ENCODE measurements at regions of chr19 and their contacts with region 1.

Region 1: DNA sequence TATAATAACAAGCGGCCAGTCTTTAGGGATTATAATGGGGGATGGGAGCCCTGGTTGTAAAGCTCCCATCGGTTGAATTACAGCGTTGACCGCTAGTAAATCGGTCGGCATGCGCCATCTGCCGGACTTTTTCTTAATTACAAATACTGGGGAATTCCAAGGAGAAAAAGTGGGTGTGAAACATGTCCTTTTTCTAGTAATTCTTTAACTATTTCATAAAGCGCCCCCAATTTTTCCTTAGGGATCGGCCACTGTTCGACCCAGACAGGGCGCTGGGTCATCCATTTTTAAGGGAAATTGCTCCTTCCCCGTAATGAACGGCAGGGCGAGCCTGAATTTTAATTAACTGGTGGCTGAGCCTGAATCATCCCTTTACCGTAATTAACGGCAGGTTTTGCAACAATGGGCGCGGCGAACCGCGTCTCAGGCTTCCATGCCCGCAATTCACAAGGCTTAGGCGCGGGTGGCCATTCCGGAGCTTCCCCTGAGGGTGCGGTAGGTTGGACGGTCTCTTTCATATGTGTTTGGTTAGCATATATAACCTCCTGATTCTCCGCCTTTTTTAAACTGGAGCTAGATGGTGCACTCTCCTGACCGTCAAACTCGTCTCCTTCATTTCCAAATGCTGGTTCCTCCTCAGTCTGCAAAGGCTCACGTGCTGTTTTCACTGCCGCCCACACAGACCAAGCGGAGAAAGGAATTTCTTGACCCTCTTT is 30.2 kb upstream of the EVI5L start:
- DNase-seq: peak; percentile 76
- H3K4me3 ChIP-seq: peak overlapping the region in 1 of 4 donors; percentile 15
- H3K27ac ChIP-seq: no peak overlapping the region
- H3K4me1 ChIP-seq: peaks cover 0 to 4% (median 0%) of the 10 kb centered on the region in 4 donors
- H3K27me3 ChIP-seq: peaks cover 4 to 80% (median 35%) of the 10 kb centered on the region in 3 donors
- CTCF ChIP-seq: peak in 3 of 4 experiments; percentile 33 to 42 (median 38)
- EP300 ChIP-seq: no peak
- POLR2A ChIP-seq: no peak

Region 2: DNA sequence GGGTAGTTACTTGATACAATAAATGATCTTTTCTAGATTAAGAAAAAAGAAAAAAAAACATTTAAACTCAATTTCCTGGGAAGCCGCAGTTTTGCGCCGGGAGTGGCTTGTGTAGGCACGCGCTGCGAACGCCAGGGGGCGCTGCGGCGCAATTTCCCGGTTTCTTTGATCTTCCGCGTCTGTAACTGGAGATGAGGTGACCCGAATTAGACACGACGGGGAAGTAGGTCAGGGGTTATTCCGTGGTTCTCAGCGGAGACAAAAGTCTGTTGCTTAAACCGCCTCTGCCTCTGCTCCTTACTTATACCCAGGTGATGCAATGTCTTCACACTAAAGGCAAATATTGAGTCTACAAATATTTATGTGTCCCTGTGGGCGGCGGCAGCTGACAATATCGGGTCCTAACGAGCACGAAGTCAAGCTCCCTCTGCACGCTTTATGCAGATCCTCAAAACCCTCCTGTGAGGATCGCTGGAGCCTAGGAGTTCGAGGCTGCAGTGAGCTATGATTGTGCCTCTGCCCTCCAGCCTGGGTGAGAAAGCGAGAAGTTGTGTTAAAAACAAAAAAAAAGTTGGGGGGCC is 147.6 kb before region 1 on chr19:
- intact Hi-C with region 1: loop called (anchors 2 kb)
- DNase-seq: peak; percentile 90
- H3K4me3 ChIP-seq: peak overlapping the region in 2 of 4 donors; percentile 28 to 30
- H3K27ac ChIP-seq: peak overlapping the region in 1 of 4 donors; percentile 35
- H3K4me1 ChIP-seq: peaks cover 0 to 8% (median 4%) of the 10 kb centered on the region in 4 donors
- H3K27me3 ChIP-seq: peaks cover 0 to 12% (median 0%) of the 10 kb centered on the region in 3 donors
- CTCF ChIP-seq: peak; percentile 88 to 96 (median 92)
- EP300 ChIP-seq: no peak
- POLR2A ChIP-seq: no peak

Region 3: DNA sequence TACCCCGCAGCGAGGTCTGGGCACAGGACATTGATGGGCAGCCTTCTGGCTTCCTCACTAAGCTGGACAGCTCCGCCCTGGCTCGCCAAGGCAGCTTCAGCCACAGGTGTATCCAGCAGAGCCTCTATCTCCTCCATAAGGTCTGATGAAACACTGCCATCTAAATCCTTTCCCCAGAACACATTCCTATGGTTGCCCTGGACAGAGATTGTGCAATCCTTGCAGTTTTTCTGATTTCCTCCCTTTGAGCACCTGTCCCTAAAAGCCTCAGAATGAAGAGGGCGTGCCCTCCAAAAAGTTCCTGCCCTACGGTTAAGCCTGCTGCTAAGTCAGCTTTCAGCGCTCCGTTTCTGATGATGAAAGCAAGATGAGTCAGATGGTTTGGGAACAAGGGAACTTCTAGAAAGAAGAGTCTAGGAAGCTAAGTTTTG is 15.8 kb before region 1 on chr19:
- intact Hi-C with region 1: no loop called
- DNase-seq: no peak
- H3K4me3 ChIP-seq: no peak overlapping the region
- H3K27ac ChIP-seq: no peak overlapping the region
- H3K4me1 ChIP-seq: peaks cover 0 to 8% (median 2%) of the 10 kb centered on the region in 4 donors
- H3K27me3 ChIP-seq: peaks cover 15 to 88% (median 38%) of the 10 kb centered on the region in 3 donors
- CTCF ChIP-seq: no peak
- EP300 ChIP-seq: no peak
- POLR2A ChIP-seq: no peak

Measured in sigmoid colon (tissue), 7 donors.